HCT116 (cell line): ENCODE measurements at regions of chr3 and their contacts with region 1.

Region 1: GRCh38 chr3:134794950-134795745 is at the start of gene EPHB1:
- DNase-seq: peak; percentile 60
- ATAC-seq: peak; percentile 97
- H3K4me3 ChIP-seq: no peak within 1 kb of the TSS
- H3K27ac ChIP-seq: no peak within 1 kb of the TSS
- H3K4me1 ChIP-seq: no peaks in the 10 kb centered on the region
- H3K27me3 ChIP-seq: peaks cover 30% of the 10 kb centered on the region
- CTCF ChIP-seq: peak; percentile 70 to 92 (median 89)
- POLR2A ChIP-seq: no peak
- RAD21 ChIP-seq: peak; percentile 91
- total RNA-seq, gene EPHB1: 0.86 TPM

Region 2: DNA sequence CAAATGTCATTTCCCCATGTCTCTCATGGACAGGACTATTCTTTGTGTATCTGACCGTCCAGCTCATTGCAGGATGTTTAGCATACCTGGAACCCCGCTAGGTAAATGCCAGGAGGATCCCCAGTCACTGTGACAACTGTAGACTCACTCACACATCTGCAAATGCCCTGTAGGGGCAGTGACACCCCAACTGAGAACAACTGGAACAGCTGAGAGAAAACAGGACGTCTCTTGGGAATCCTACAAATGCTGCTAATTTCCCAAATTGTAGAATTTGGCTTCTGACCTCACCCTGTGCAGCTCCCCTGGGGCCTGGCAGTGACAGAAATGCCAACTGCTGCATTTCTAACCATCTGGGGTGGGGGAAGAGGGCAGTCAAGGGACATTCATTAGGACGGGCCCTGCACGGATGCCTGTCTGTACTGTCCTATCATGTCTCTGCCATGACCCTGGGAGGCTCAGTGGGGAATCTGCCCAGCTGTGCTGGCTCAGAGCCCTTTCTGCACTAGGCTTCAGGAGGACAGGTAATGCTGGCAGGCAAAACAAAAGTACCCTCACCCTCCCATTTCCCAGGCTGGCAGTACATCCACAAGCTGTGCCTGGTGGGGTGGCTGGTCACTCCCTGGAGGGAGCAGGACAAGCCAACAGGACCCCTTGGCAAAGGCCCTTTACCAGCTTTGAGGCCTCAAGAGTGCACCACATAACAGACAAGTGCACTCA is 929.9 kb before region 1 on chr3:
- CTCF ChIA-PET with region 1: no interaction called
- POLR2A ChIA-PET with region 1: no interaction called
- RAD21 ChIA-PET with region 1: no interaction called
- intact Hi-C with region 1: no loop called
- DNase-seq: no peak
- ATAC-seq: peak; percentile 63; the same call in 1 of the 2 replicates
- H3K4me3 ChIP-seq: no peak overlapping the region
- H3K27ac ChIP-seq: no peak overlapping the region
- H3K4me1 ChIP-seq: no peaks in the 10 kb centered on the region
- H3K27me3 ChIP-seq: no peaks in the 10 kb centered on the region
- CTCF ChIP-seq: 0 out of 6 replicates have a peak, but pooled peaks of 1 of the 3 experiments have one; percentile 6
- POLR2A ChIP-seq: no peak
- RAD21 ChIP-seq: no peak

Region 3: GRCh38 chr3:135503760-135504686 is 708.9 kb after region 1 on chr3:
- CTCF ChIA-PET with region 1: interaction called, 20 read pairs
- POLR2A ChIA-PET with region 1: no interaction called
- RAD21 ChIA-PET with region 1: interaction called, 5 to 8 read pairs
- intact Hi-C with region 1: loop called (anchors 1 kb)
- DNase-seq: peak; percentile 28
- ATAC-seq: peak; percentile 100
- H3K4me3 ChIP-seq: no peak overlapping the region
- H3K27ac ChIP-seq: no peak overlapping the region
- H3K4me1 ChIP-seq: no peaks in the 10 kb centered on the region
- H3K27me3 ChIP-seq: peaks cover 46% of the 10 kb centered on the region
- CTCF ChIP-seq: peak; percentile 54 to 85 (median 82); a peak in 5 of 6 replicates
- POLR2A ChIP-seq: no peak
- RAD21 ChIP-seq: peak; percentile 84